Right ventricle myocardium inferior (tissue), 1 donor: ENCODE measurements at regions of chr10 and their contacts with region 1.

Region 1: DNA sequence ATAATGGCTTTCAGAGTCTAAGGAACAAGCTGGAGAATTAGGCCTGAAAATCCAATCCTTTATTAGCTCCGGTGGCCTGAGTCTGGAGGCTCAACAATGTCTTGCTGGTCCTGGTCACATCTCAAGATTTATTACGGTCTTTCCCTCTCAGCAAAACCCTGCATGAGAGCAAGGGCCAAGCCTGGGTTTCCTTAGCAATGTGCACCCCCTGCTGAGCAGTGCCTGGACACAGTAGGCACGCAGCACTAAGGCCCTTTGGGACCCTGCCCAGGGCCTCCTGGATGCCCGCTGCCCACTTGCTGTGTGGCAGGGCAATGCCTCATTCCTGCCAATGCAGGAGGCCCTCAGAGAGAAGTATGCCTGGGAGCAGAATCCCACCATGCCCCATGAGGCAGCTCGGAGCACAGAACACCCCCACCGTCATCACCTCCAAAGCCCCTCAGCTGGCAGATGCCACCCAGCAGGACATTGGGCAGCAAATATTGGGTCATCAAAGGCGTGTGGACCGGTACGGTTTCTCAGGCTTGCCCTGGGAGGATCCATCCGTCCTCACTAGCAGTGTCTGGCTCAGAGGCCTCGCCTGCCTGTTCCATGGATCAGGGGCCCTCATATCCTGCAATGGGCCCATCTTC is 156.4 kb downstream of the OAT start:
- DNase-seq: no peak
- ATAC-seq: no peak

Region 2: DNA sequence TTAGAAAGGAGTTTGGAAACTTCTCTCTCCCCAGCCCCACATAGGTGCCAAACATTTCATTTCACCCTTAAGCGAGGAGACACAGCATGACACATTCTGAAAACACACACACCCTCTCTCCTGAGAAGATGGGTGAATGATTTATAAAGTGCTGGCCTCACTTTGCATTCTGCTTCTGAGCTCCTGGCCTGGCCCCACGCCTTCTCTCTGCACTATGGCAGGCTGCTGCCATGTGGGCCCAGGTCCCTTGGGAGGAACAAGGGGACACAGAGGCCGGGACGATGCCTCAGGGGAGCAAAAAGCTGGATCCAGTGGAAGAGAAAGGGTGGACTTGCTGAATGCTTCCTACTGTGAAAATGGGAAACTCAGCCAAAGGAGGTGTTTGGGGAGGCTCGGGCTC is 426.8 kb before region 1 on chr10:
- intact Hi-C with region 1: no loop called
- DNase-seq: no peak
- ATAC-seq: no peak

Region 3: DNA sequence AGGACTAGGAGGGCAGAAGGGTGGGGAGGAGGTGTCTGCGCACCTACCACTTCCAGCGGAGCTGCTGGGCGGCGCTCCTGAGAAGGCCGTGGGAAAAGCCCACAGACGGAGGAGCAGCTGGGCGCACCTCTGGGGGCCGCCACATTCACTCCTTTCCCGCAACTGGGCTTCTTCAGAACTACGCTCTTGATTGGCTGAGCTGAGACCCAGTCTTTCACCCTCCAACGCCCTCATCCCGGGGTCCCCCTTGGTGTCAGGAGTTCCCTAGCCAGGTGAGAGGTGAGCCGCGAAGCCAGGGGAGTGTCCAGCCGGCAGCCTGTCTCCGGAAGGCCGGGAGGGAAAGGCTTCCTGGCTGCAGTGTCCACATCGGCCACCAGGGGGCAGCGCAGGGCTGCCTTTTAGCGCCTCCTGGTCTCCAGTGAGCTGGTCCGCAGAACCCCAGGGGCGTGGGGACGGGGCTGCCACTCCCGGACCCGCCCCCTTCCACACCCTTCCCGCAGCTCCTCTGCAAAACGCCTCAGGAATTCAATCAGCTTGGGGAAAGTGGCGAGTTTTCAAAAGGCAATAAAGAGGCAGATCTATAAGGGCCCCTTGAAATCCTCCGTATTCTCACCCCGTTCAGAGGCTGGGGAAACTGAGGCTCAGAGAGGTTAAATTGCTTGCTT is 267.8 kb before region 1 on chr10:
- intact Hi-C with region 1: loop called (anchors 1 kb)
- DNase-seq: peak; percentile 93
- ATAC-seq: peak; percentile 82